ENCODE measurements at regions of chr9 and their contacts with region 1.

Region 1: DNA sequence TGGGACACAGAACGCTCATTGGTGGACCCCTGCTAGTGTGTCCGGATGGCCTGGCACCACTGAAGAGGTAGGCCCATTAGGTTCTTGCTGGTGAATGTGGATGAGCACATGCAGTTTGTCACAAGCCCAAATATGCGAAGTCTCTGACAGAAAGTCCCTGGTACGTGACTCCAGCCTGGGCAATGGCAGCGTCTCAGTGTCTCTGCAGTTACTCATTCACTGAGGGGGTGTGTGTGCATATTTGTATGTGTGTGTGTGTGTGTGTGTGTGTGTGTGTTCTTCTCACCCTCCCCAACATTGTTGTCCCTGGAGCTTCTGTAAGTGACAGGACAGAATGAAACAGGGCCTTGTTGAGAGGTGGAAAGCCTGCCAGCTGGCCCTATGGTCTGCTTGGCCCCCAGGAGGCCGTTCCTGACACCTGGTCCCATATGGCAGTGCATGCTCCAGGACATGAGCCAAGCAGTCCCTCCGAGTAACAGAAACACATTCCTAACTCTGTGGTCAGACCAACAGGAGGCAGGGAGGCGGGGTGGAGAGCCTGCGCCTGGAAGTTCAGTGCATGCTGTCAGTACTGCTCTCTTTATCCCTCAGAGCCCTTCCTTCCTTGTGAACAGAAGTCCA is 169.9 kb downstream of the SLC28A3 start:
- DNase-seq: peak; percentile 79
- H3K4me3 Mint-ChIP-seq: no peak overlapping the region
- H3K27ac Mint-ChIP-seq: peak overlapping the region; percentile 69
- H3K4me1 Mint-ChIP-seq: peaks cover 21% of the 10 kb centered on the region
- H3K27me3 Mint-ChIP-seq: no peaks in the 10 kb centered on the region
- CTCF ChIP-seq: peak; percentile 17

Region 2: GRCh38 chr9:83937911-83938323 is 232.7 kb before region 1 on chr9:
- CTCF ChIA-PET with region 1: interaction called, 7 read pairs
- POLR2A ChIA-PET with region 1: no interaction called
- intact Hi-C with region 1: loop called (anchors 2 kb)
- DNase-seq: peak; percentile 83
- H3K4me3 Mint-ChIP-seq: no peak overlapping the region
- H3K27ac Mint-ChIP-seq: no peak overlapping the region
- H3K4me1 Mint-ChIP-seq: peaks cover 41% of the 10 kb centered on the region
- H3K27me3 Mint-ChIP-seq: no peaks in the 10 kb centered on the region
- CTCF ChIP-seq: peak; percentile 67

Region 3: DNA sequence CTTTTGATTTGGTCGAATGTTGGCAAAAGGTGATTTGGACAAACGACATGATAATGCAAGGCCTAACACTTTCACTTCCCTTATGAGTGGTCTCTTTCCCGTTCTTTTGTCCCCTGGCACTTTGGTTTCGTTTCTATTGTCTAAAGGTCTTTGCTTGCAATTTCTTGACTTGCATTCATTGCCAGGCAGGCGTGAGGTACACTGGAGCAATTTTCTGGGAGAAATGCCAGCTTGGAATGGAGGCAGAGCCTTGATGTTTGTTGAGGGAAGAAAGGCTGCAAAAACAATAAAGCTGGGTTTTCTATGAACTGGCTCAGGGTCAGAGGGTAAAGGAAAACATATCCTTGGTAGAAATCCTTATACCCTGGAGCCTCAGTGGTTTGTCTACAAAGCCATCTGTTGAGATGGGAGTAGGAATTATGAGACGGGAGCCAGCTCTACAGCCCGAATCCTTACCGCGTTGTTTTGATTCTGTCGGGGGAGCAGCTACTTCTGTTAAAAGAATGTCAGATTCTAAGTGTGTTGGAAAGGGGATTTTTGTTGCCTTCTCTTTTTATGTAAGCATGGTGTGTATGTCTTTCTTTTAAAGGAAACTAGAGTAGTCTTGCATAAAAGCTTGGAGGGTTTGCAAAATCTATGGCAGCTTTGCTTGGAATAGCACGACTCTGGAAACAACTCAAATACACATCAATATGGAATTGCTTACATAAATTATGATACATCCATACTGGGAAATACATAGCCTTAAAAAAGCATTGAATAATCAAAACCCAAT is 31.1 kb before region 1 on chr9:
- CTCF ChIA-PET with region 1: interaction called, 48 read pairs
- POLR2A ChIA-PET with region 1: interaction called, 9 read pairs
- intact Hi-C with region 1: loop called (anchors 2 kb)
- DNase-seq: peak; percentile 90
- H3K4me3 Mint-ChIP-seq: peak overlapping the region; percentile 67
- H3K27ac Mint-ChIP-seq: peak overlapping the region; percentile 88
- H3K4me1 Mint-ChIP-seq: peaks cover 29% of the 10 kb centered on the region
- H3K27me3 Mint-ChIP-seq: no peaks in the 10 kb centered on the region
- CTCF ChIP-seq: no peak

Region 4: GRCh38 chr9:84216151-84216550 is 45.5 kb after region 1 on chr9:
- CTCF ChIA-PET with region 1: interaction called, 18 read pairs
- POLR2A ChIA-PET with region 1: interaction called, 3 read pairs
- intact Hi-C with region 1: no loop called
- DNase-seq: peak; percentile 8
- H3K4me3 Mint-ChIP-seq: no peak overlapping the region
- H3K27ac Mint-ChIP-seq: no peak overlapping the region
- H3K4me1 Mint-ChIP-seq: peaks cover 6% of the 10 kb centered on the region
- H3K27me3 Mint-ChIP-seq: no peaks in the 10 kb centered on the region
- CTCF ChIP-seq: no peak

Measured in MCF 10A (cell line).